ENCODE measurements at regions of chr2 and their contacts with region 1.

Region 1: DNA sequence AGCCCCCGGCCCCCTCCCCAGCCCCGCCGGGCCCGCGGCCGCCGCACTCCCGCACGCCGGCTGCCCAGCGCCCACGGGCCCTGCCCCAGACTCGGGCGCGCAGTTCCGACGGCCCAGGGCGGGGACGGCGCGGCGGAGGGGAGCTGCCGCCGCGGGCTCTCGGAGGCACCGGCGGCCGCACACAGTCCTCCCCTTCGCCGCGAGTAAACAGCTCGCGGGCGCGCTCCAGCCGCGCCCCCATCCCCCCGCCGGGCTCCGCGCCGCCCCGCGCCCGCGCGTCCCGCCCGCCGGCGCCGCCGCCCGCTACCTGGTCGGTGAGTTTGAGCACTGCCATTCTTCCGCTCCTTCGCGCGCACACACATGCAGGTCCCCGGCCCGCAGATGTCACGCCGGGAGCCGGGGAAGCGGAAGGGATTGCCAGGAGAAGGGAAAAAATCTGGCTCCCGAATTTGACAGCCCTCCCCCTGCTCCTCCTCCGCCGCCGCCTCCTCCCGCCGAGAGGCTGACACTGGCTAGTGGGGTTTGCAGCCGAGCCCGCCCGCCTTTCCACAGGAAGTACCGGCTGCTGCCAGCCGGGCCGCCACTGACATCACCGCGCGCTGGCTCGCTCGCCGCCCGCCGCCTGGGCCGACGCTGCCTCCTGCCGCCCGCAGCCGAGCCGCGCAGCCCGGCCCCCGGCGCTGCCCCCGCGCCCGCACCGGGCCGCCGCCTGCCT is at the start of gene ANKRD44:
- DNase-seq: peak; percentile 91
- H3K4me3 Mint-ChIP-seq: peak within 1 kb of the TSS; percentile 95
- H3K27ac Mint-ChIP-seq: peak within 1 kb of the TSS; percentile 99
- H3K4me1 Mint-ChIP-seq: peaks cover 67% of the 10 kb centered on the region
- H3K27me3 Mint-ChIP-seq: no peaks in the 10 kb centered on the region
- total RNA-seq, gene ANKRD44: 123 to 125 TPM

Region 2: DNA sequence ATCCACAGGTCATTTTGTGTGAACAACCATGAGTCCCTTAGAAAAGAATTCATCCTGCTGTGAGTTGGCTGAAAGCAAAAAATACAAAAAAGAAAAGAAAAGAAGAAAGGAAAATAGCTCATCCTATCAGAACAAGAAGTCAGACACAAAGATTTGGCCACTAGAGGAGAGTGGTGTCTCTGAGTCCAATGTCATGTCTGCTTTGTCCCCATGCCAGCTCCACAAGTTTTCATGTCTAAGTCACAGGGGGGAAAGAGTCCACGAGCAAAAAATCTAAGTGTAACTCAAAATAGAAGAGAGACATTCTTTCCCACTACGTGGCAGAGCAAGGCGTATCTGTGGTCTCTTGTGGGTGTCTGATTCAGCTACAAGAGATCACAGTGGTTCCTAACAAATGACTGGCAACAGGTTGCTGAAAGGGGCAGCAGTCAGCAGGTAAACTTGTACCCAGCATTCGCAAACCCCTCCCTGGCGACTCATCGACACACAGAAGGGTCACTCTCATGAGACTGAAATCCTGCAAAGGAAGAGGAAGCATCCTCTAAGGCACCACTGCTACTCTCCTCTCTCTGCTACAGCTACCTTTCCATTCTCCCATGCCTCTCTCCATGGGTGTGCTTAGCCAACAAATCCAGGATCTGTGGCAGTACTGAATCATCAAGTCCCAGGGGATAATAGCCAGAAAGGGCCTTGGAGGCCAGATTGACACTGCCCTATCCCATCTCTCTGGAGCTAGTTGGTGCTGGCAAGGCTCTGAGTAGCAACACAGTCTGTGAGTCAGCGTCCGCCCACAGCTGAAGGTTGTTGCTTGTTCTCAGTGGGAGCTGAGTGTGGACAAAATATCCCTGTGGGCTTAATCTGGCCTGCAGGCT is 1776.4 kb before region 1 on chr2:
- CTCF ChIA-PET with region 1: no interaction called
- POLR2A ChIA-PET with region 1: no interaction called
- intact Hi-C with region 1: loop called (anchors 10 kb)
- DNase-seq: peak; percentile 87
- H3K4me3 Mint-ChIP-seq: peak overlapping the region; percentile 74
- H3K27ac Mint-ChIP-seq: peak overlapping the region; percentile 98
- H3K4me1 Mint-ChIP-seq: peaks cover 80% of the 10 kb centered on the region
- H3K27me3 Mint-ChIP-seq: no peaks in the 10 kb centered on the region

Region 3: GRCh38 chr2:196944584-196944983 is 365.8 kb before region 1 on chr2:
- CTCF ChIA-PET with region 1: no interaction called
- POLR2A ChIA-PET with region 1: no interaction called
- intact Hi-C with region 1: no loop called
- DNase-seq: no peak
- H3K4me3 Mint-ChIP-seq: no peak overlapping the region
- H3K27ac Mint-ChIP-seq: no peak overlapping the region
- H3K4me1 Mint-ChIP-seq: no peaks in the 10 kb centered on the region
- H3K27me3 Mint-ChIP-seq: peaks cover 3% of the 10 kb centered on the region

Region 4: DNA sequence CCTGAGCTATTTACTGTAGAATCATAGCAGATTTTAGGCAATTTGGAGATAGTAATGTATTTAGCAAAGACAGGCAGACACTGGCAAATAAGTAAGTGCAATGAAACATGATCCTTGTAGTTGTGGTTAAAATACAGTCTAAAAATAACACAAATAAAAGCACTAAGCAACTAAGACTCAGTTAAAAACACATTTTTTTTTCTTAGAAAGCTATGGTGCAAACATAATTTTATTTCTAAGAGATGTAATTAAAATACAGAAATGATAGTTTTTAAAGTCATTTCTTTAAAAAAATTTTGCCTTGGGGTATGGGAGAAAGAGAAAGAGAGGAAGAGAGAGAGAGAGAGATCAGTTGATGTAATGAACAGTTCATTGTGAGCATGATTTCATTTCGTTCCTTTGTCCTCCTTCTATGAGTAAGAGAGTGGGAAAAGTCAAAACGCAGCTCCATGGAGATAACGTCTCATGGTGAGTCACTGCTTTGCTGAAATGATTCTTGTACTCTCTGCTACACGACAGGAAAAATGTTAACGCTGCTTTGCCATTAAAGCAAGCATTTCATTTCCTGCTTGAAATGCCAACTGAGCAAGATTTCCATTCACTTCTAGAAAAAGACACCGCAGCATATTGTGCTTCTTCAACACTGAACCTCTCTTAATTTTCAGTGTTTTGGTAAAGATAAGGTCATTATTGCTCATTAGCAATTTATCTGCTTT is 322.6 kb before region 1 on chr2:
- CTCF ChIA-PET with region 1: no interaction called
- POLR2A ChIA-PET with region 1: no interaction called
- intact Hi-C with region 1: loop called (anchors 5 kb)
- DNase-seq: peak; percentile 61
- H3K4me3 Mint-ChIP-seq: peak overlapping the region; percentile 7
- H3K27ac Mint-ChIP-seq: peak overlapping the region; percentile 88
- H3K4me1 Mint-ChIP-seq: peaks cover 61% of the 10 kb centered on the region
- H3K27me3 Mint-ChIP-seq: no peaks in the 10 kb centered on the region

Region 5: DNA sequence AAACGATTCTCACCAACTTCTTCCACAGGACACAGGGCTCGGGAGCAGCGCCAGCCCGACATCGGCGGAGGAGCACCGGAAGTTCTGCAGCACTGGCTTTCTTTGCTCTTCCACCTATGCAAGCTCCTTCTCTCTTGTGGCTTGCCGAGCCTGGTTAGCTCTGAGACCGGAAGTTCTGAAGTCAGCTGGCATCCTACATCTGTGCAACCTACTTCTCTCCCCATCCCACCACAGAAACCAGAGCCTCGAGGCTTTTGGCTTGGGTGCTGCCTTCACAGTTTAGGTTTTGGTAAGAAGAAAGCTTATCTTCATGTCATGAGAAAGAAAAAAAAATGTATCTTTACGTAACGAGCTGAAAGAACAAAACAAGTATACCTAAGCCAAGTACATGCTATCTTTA is 111.5 kb before region 1 on chr2:
- CTCF ChIA-PET with region 1: interaction called, 27 read pairs
- POLR2A ChIA-PET with region 1: interaction called, 18 read pairs
- intact Hi-C with region 1: no loop called
- DNase-seq: peak; percentile 95
- H3K4me3 Mint-ChIP-seq: peak overlapping the region; percentile 80
- H3K27ac Mint-ChIP-seq: peak overlapping the region; percentile 93
- H3K4me1 Mint-ChIP-seq: peaks cover 90% of the 10 kb centered on the region
- H3K27me3 Mint-ChIP-seq: no peaks in the 10 kb centered on the region

Region 6: DNA sequence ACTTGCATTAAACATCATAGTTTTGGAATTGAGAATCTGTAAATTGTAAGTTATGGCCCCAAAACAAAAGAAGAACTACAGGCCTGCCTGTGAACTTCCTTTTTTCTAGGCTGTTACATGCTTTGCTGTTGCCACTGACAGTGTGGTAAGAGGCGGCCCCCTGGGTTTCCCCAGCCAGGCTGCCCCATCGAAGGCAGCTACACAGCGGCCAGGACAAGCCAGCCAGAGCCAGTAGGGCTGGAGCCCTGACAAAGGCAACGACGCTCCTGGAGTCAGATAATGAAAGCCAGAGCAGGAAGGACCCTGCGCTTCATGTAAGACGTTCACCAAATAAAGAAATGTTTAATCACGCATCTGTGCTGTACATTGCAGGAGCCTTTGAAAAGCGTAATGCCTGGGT is 54.9 kb before region 1 on chr2:
- CTCF ChIA-PET with region 1: interaction called, 5 read pairs
- POLR2A ChIA-PET with region 1: interaction called, 33 read pairs
- intact Hi-C with region 1: loop called (anchors 1 kb)
- DNase-seq: peak; percentile 88
- H3K4me3 Mint-ChIP-seq: peak overlapping the region; percentile 85
- H3K27ac Mint-ChIP-seq: peak overlapping the region; percentile 100
- H3K4me1 Mint-ChIP-seq: peaks cover 82% of the 10 kb centered on the region
- H3K27me3 Mint-ChIP-seq: no peaks in the 10 kb centered on the region

Region 7: DNA sequence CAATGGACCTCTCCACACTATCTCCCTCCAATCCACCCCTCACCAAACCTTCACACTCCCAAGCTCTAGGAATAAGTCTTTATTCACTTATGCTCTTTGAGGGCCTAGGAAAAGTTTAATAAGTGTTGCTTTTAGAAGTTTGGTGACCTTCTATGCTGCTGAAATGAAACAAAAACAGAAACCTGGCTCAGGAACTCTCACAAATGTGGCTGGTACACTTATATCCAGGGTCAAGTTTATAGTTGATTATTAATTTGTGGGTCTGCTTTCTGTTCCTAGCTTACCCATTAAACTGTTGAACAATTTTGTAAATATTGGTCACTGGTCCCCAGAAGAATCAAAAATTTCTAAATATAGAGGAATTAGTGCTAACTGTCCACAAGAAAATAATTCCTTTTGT is 14.4 kb after region 1 on chr2:
- CTCF ChIA-PET with region 1: interaction called, 11 read pairs
- POLR2A ChIA-PET with region 1: interaction called, 9 read pairs
- intact Hi-C with region 1: no loop called
- DNase-seq: no peak
- H3K4me3 Mint-ChIP-seq: no peak overlapping the region
- H3K27ac Mint-ChIP-seq: peak overlapping the region; percentile 78
- H3K4me1 Mint-ChIP-seq: peaks cover 74% of the 10 kb centered on the region
- H3K27me3 Mint-ChIP-seq: no peaks in the 10 kb centered on the region

Region 8: GRCh38 chr2:197538412-197538811 is 228.0 kb after region 1 on chr2:
- CTCF ChIA-PET with region 1: no interaction called
- POLR2A ChIA-PET with region 1: no interaction called
- intact Hi-C with region 1: no loop called
- DNase-seq: no peak
- H3K4me3 Mint-ChIP-seq: no peak overlapping the region
- H3K27ac Mint-ChIP-seq: peak overlapping the region; percentile 33
- H3K4me1 Mint-ChIP-seq: peaks cover 33% of the 10 kb centered on the region
- H3K27me3 Mint-ChIP-seq: no peaks in the 10 kb centered on the region